ENCODE measurements at regions of chr15 and their contacts with region 1.

Region 1: GRCh38 chr15:41230650-41231533 is at the starts of genes CHP1 and EXD1:
- DNase-seq: peak; percentile 99
- ATAC-seq: peak; percentile 95
- H3K4me3 ChIP-seq: peak within 1 kb of the TSS; percentile 56 to 67
- H3K27ac ChIP-seq: peak within 1 kb of the TSS; percentile 83 to 99 (median 90)
- H3K4me1 ChIP-seq: peaks cover 28% of the 10 kb centered on the region
- H3K27me3 ChIP-seq: no peaks in the 10 kb centered on the region
- CTCF ChIP-seq: peak; percentile 82 to 97 (median 91)
- POLR2A ChIP-seq: peak; percentile 88 to 95 (median 93)
- total RNA-seq, gene CHP1: 61.0 to 87.9 TPM
- total RNA-seq, gene EXD1: not detected

Region 2: GRCh38 chr15:41125931-41126642 is 104.8 kb before region 1 on chr15:
- intact Hi-C with region 1: loop called (anchors 10 kb)
- DNase-seq: no peak
- ATAC-seq: no peak
- H3K4me3 ChIP-seq: no peak overlapping the region
- H3K27ac ChIP-seq: no peak overlapping the region
- H3K4me1 ChIP-seq: no peaks in the 10 kb centered on the region
- H3K27me3 ChIP-seq: no peaks in the 10 kb centered on the region
- CTCF ChIP-seq: no peak
- POLR2A ChIP-seq: no peak

Region 3: DNA sequence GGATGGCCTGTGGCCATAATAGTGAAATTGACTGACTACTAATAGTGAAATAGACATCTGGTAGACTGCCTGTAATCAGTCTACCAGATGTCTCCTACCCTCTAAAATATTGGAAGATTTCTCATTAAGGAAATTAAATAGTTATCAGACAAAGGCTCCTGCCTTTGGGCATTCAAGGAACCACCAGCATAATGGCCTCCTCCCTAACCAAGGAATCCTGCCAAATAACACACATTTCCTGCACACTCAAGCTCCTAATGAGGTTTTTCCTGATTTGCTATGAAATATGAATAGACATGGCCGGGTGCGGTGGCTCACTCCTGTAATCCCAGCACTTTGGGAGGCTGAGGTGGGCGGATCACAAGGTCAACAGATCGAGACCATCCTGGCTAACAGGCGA is 116.3 kb after region 1 on chr15:
- intact Hi-C with region 1: no loop called
- DNase-seq: no peak
- ATAC-seq: no peak
- H3K4me3 ChIP-seq: no peak overlapping the region
- H3K27ac ChIP-seq: no peak overlapping the region
- H3K4me1 ChIP-seq: peaks cover 14% of the 10 kb centered on the region
- H3K27me3 ChIP-seq: no peaks in the 10 kb centered on the region
- CTCF ChIP-seq: no peak
- POLR2A ChIP-seq: no peak